ENCODE measurements at regions of chr11 and their contacts with region 1.

Region 1: GRCh38 chr11:44727373-44728287 is 868 bp downstream of the TSPAN18 start:
- DNase-seq: peak; percentile 94
- H3K4me3 ChIP-seq: peak overlapping the region; percentile 57 to 84 (median 60)
- H3K27ac ChIP-seq: peak overlapping the region in 7 of 8 donors; percentile 1 to 77 (median 62)
- H3K4me1 ChIP-seq: peaks cover 15 to 63% (median 48%) of the 10 kb centered on the region in 6 donors
- H3K27me3 ChIP-seq: peaks cover 0 to 45% (median 14%) of the 10 kb centered on the region in 7 donors
- CTCF ChIP-seq: peak; percentile 50 to 97 (median 93)
- POLR2A ChIP-seq: no peak

Region 2: GRCh38 chr11:44556735-44557409 is 170.8 kb before region 1 on chr11:
- intact Hi-C with region 1: no loop called
- DNase-seq: peak; percentile 88
- H3K4me3 ChIP-seq: no peak overlapping the region
- H3K27ac ChIP-seq: peak overlapping the region in 7 of 8 donors; percentile 20 to 81 (median 60)
- H3K4me1 ChIP-seq: peaks cover 15 to 69% (median 37%) of the 10 kb centered on the region in 6 donors
- H3K27me3 ChIP-seq: no peaks in the 10 kb centered on the region
- CTCF ChIP-seq: peak; percentile 64 to 89 (median 77)
- POLR2A ChIP-seq: no peak

Region 3: GRCh38 chr11:44823006-44823405 is 95.4 kb after region 1 on chr11:
- intact Hi-C with region 1: no loop called
- DNase-seq: peak; percentile 36
- H3K4me3 ChIP-seq: no peak overlapping the region
- H3K27ac ChIP-seq: peak overlapping the region in 3 of 8 donors; percentile 78 to 80 (median 79)
- H3K4me1 ChIP-seq: peaks cover 0 to 46% (median 6%) of the 10 kb centered on the region in 6 donors
- H3K27me3 ChIP-seq: no peaks in the 10 kb centered on the region
- CTCF ChIP-seq: peak in 1 of 11 experiments; percentile 19
- POLR2A ChIP-seq: no peak

Region 4: DNA sequence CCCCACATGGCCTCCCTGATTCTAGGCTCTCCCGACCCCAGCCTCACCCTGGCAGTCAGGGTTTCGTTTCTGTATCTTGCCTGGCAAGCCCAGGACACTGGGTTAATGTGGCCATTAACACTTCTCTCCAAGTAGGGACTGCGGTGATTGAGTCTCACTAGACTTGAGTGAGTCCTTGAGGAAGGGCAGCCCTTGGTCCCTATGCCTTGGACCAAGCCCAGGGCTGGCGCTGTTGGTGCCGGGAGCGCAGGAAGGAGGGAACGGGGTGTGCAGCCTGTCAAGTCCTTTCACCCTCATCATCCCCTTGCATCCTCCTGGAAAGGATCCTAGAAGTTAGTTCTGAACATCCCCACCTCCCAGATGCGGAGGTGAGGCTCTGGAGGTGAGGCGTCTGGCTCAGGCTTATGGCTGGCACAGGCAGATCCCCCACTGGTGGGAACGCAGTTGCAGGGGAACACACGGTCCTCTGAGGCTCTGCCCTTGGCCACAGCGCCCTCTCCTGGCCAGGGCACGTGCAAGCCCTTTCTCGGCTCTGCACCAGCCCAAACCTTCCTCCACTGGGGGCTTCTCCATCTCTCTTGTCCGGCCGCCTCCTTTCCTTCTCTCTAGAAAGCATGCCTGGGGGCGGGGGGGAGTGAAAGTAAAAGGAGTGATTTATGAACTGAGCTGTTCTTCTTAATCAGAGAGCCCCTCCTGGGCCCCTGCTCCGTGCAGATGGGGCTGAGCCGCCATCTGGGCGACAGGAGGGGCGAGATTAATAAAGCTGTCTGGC is 166.4 kb after region 1 on chr11:
- intact Hi-C with region 1: loop called (anchors 5 kb)
- DNase-seq: peak; percentile 87
- H3K4me3 ChIP-seq: peak overlapping the region in 1 of 8 donors; percentile 10
- H3K27ac ChIP-seq: no peak overlapping the region
- H3K4me1 ChIP-seq: peaks cover 0 to 17% (median 9%) of the 10 kb centered on the region in 6 donors
- H3K27me3 ChIP-seq: peaks cover 0 to 20% (median 0%) of the 10 kb centered on the region in 7 donors
- CTCF ChIP-seq: peak; percentile 62 to 86 (median 78)
- POLR2A ChIP-seq: no peak

Measured in spleen (tissue), 13 donors.